ENCODE measurements at regions of chr2 and their contacts with region 1.

Region 1: DNA sequence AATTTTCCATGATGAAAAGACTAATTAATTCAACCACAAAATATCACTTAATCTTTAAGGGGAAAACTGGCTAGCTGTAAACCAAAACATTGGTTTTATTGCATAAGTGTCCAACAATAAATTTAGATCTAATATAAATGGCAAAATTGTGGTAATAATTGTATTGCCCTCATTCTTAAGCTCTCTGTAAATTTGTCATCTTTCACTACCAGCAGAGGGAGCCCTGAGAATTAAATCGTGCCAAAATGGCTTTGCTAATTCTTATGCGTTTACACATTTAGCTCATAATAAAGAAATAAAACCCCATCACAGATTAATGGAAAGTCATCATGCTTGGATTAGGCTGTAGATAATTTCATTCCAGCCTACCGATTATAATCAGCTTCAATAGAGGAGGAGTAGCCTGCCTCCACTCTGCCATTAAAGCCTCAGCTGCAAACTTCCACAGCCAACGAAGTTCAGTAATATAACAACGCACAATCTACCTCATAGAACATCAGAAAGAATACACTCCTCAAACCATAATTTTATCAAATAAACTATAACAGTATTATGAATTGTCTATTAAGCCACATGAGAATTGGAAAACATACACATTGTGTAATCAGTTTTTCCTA is 70.0 kb upstream of the ATP5MC3 start:
- DNase-seq: no peak
- ATAC-seq: no peak
- H3K4me3 Mint-ChIP-seq: no peak overlapping the region
- H3K27ac Mint-ChIP-seq: no peak overlapping the region
- H3K4me1 Mint-ChIP-seq: no peaks in the 10 kb centered on the region
- H3K27me3 Mint-ChIP-seq: peaks cover 32% of the 10 kb centered on the region

Region 2: GRCh38 chr2:175203621-175204496 is 47.7 kb before region 1 on chr2:
- CTCF ChIA-PET with region 1: interaction called, 18 read pairs
- DNase-seq: peak; percentile 71
- ATAC-seq: peak; percentile 89
- H3K4me3 Mint-ChIP-seq: no peak overlapping the region
- H3K27ac Mint-ChIP-seq: no peak overlapping the region
- H3K4me1 Mint-ChIP-seq: peaks cover 2% of the 10 kb centered on the region
- H3K27me3 Mint-ChIP-seq: peaks cover 16% of the 10 kb centered on the region

Region 3: DNA sequence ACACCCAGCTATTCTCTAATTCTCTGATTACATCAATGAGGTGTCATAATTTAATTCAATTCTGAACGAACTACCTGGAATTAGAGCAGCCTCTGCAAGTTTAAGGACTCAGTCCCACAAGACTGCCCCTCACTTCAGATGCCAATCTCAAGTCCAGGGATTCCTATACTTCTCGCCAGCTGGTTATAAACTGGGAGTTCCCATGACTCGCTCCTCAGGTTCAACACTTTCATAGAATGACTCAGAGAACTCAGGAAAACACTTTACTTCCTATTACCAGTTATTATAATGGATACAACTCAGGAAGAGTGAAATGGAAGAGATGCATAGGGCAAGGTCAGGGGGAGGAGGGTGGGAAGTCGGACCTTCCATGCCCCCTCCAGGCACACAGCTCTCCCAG is 42.2 kb after region 1 on chr2:
- CTCF ChIA-PET with region 1: no interaction called
- DNase-seq: no peak
- ATAC-seq: no peak
- H3K4me3 Mint-ChIP-seq: no peak overlapping the region
- H3K27ac Mint-ChIP-seq: no peak overlapping the region
- H3K4me1 Mint-ChIP-seq: no peaks in the 10 kb centered on the region
- H3K27me3 Mint-ChIP-seq: peaks cover 60% of the 10 kb centered on the region

Region 4: DNA sequence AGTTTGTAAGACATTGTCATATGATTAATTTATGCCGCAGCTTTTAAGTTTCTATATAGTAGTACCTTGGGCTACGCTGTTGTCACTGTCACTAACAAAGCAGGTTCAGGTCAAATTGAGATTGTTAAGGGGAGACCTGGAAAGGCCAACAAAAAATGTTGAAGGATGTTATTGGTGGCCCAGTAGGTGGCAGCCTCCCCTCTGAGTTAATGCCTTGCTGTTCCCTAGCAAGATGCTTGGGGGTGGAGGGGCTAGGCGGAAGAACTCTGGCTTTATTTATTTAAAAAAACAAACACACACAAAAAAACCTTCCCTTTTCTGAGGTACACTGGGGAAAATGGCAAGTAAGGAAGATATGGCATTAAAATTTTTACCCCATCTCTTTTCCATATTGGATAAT is 58.3 kb after region 1 on chr2:
- CTCF ChIA-PET with region 1: no interaction called
- DNase-seq: peak; percentile 42
- ATAC-seq: no peak
- H3K4me3 Mint-ChIP-seq: no peak overlapping the region
- H3K27ac Mint-ChIP-seq: no peak overlapping the region
- H3K4me1 Mint-ChIP-seq: no peaks in the 10 kb centered on the region
- H3K27me3 Mint-ChIP-seq: peaks cover 51% of the 10 kb centered on the region